Breast epithelium (tissue), 4 donors: ENCODE measurements at regions of chr2 and their contacts with region 1.

Region 1: GRCh38 chr2:238938401-238939055 is 90.6 kb downstream of the TWIST2 start:
- DNase-seq: peak in 1 of 2 donors; percentile 58
- H3K4me3 ChIP-seq: no peak overlapping the region
- H3K27ac ChIP-seq: peak overlapping the region; percentile 33 to 60
- H3K4me1 ChIP-seq: no peaks in the 10 kb centered on the region
- H3K27me3 ChIP-seq: no peaks in the 10 kb centered on the region
- CTCF ChIP-seq: no peak
- POLR2A ChIP-seq: no peak

Region 2: GRCh38 chr2:239514753-239515530 is 576.4 kb after region 1 on chr2:
- intact Hi-C with region 1: loop called (anchors 5 kb)
- DNase-seq: no peak
- H3K4me3 ChIP-seq: no peak overlapping the region
- H3K27ac ChIP-seq: no peak overlapping the region
- H3K4me1 ChIP-seq: no peaks in the 10 kb centered on the region
- H3K27me3 ChIP-seq: peaks cover 0 to 3% of the 10 kb centered on the region in 2 donors
- CTCF ChIP-seq: no peak
- POLR2A ChIP-seq: no peak